RWPE1 (cell line): ENCODE measurements at regions of chr2 and their contacts with region 1.

Region 1: GRCh38 chr2:47323009-47323821 is 79.7 kb upstream of the MSH2 start:
- DNase-seq: peak; percentile 87
- H3K27ac ChIP-seq: no peak overlapping the region
- CTCF ChIP-seq: peak; percentile 93

Region 2: GRCh38 chr2:46983065-46983801 is 340.0 kb before region 1 on chr2:
- CTCF ChIA-PET with region 1: interaction called, 12 read pairs
- POLR2A ChIA-PET with region 1: no interaction called
- DNase-seq: no peak
- H3K27ac ChIP-seq: peak overlapping the region; percentile 96
- CTCF ChIP-seq: no peak

Region 3: GRCh38 chr2:47179388-47179787 is 143.8 kb before region 1 on chr2:
- CTCF ChIA-PET with region 1: interaction called, 12 read pairs
- POLR2A ChIA-PET with region 1: no interaction called
- DNase-seq: no peak
- H3K27ac ChIP-seq: no peak overlapping the region
- CTCF ChIP-seq: no peak

Region 4: GRCh38 chr2:47345590-47345924 is 22.3 kb after region 1 on chr2:
- CTCF ChIA-PET with region 1: no interaction called
- POLR2A ChIA-PET with region 1: no interaction called
- DNase-seq: no peak
- H3K27ac ChIP-seq: no peak overlapping the region
- CTCF ChIP-seq: no peak

Region 5: GRCh38 chr2:47460766-47461165 is 137.6 kb after region 1 on chr2:
- CTCF ChIA-PET with region 1: no interaction called
- POLR2A ChIA-PET with region 1: no interaction called
- DNase-seq: no peak
- H3K27ac ChIP-seq: no peak overlapping the region
- CTCF ChIP-seq: no peak

Region 6: GRCh38 chr2:47512581-47513083 is 189.4 kb after region 1 on chr2:
- CTCF ChIA-PET with region 1: no interaction called
- POLR2A ChIA-PET with region 1: no interaction called
- DNase-seq: peak; percentile 20
- H3K27ac ChIP-seq: no peak overlapping the region
- CTCF ChIP-seq: no peak

Region 7: GRCh38 chr2:47708801-47709499 is 385.7 kb after region 1 on chr2:
- CTCF ChIA-PET with region 1: no interaction called
- POLR2A ChIA-PET with region 1: no interaction called
- DNase-seq: no peak
- H3K27ac ChIP-seq: no peak overlapping the region
- CTCF ChIP-seq: no peak